Calu3 (cell line): ENCODE measurements at regions of chr2 and their contacts with region 1.

Region 1: GRCh38 chr2:141806090-141806489 is 324.7 kb downstream of the LRP1B start:
- DNase-seq: no peak
- H3K4me3 Mint-ChIP-seq: no peak overlapping the region
- H3K27ac Mint-ChIP-seq: no peak overlapping the region
- H3K4me1 Mint-ChIP-seq: no peaks in the 10 kb centered on the region
- H3K27me3 Mint-ChIP-seq: no peaks in the 10 kb centered on the region
- CTCF ChIP-seq: no peak

Region 2: GRCh38 chr2:141778315-141778835 is 27.7 kb before region 1 on chr2:
- CTCF ChIA-PET with region 1: no interaction called
- intact Hi-C with region 1: loop called (anchors 1 kb)
- DNase-seq: no peak
- H3K4me3 Mint-ChIP-seq: no peak overlapping the region
- H3K27ac Mint-ChIP-seq: no peak overlapping the region
- H3K4me1 Mint-ChIP-seq: no peaks in the 10 kb centered on the region
- H3K27me3 Mint-ChIP-seq: no peaks in the 10 kb centered on the region
- CTCF ChIP-seq: no peak

Region 3: GRCh38 chr2:141791521-141791920 is 14.6 kb before region 1 on chr2:
- CTCF ChIA-PET with region 1: no interaction called
- intact Hi-C with region 1: no loop called
- DNase-seq: no peak
- H3K4me3 Mint-ChIP-seq: no peak overlapping the region
- H3K27ac Mint-ChIP-seq: no peak overlapping the region
- H3K4me1 Mint-ChIP-seq: no peaks in the 10 kb centered on the region
- H3K27me3 Mint-ChIP-seq: no peaks in the 10 kb centered on the region
- CTCF ChIP-seq: no peak

Region 4: GRCh38 chr2:142270990-142271389 is 464.9 kb after region 1 on chr2:
- CTCF ChIA-PET with region 1: no interaction called
- intact Hi-C with region 1: no loop called
- DNase-seq: no peak
- H3K4me3 Mint-ChIP-seq: no peak overlapping the region
- H3K27ac Mint-ChIP-seq: no peak overlapping the region
- H3K4me1 Mint-ChIP-seq: no peaks in the 10 kb centered on the region
- H3K27me3 Mint-ChIP-seq: no peaks in the 10 kb centered on the region
- CTCF ChIP-seq: no peak